ENCODE measurements at regions of chr4 and their contacts with region 1.

Region 1: GRCh38 chr4:56038487-56039148 is 89.9 kb downstream of the CEP135 start:
- DNase-seq: no peak

Region 2: DNA sequence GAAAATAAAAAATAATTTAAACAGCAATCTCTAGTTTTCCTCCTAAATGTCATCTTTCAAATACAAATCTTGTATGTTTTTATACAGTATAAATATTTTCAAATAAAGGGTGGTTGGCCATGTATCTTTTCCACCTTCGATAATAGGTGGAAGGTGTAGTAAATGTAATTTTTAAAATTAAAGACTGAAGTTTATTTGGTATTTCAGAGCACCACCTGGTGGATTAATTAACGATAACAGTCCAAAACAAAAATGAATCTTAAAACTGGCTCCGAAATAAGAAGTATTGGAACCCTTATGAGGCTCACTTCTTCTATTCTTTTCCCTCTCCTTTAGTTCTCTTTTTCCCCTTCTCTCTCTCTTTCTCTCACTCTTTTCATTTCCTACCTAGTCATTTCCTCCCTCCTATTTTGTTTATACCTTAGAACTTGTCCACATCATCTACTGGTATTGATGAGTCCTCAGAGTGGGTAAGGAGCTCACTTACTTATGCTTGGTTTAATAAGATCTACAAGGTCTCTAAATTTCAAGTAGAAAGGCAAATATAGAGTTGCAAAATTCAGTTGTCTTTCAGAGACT is 301.9 kb before region 1 on chr4:
- intact Hi-C with region 1: no loop called
- DNase-seq: no peak

Region 3: GRCh38 chr4:56026596-56026995 is 12.0 kb before region 1 on chr4:
- intact Hi-C with region 1: loop called in 1 of 2 experiments (anchors 2 kb)
- DNase-seq: no peak

Region 4: DNA sequence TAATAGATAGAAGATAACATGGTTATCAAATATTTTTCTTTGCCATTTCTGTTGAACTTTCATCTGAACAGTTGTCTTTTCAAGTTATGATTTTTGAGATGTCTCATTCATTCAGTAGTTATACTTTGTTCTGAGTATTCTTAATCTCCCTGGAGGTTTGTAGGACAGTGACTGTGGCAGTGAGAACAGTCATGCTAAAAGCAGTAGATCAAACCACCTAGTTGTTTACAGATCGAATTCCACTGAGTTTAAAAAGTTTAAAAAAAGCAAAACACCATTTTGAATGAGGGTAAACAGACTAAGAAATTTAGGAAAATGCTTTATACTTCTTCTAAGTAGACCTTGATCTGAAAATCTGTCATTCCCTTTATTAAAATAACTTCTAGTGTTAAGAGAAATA is 17.4 kb after region 1 on chr4:
- intact Hi-C with region 1: loop called in 1 of 2 experiments (anchors 1 kb)
- DNase-seq: no peak